ENCODE measurements at regions of chr19 and their contacts with region 1.

Region 1: GRCh38 chr19:17390665-17391370 is 3.2 kb downstream of the CCDC194 start:
- DNase-seq: peak; percentile 93
- H3K4me3 ChIP-seq: peak overlapping the region; percentile 11 to 50 (median 30)
- H3K27ac ChIP-seq: peak overlapping the region; percentile 10 to 53 (median 38)
- H3K4me1 ChIP-seq: peaks cover 0 to 22% (median 11%) of the 10 kb centered on the region in 4 donors
- H3K27me3 ChIP-seq: peaks cover 36% of the 10 kb centered on the region
- CTCF ChIP-seq: peak; percentile 38 to 76 (median 58)
- EP300 ChIP-seq: no peak
- POLR2A ChIP-seq: no peak

Region 2: DNA sequence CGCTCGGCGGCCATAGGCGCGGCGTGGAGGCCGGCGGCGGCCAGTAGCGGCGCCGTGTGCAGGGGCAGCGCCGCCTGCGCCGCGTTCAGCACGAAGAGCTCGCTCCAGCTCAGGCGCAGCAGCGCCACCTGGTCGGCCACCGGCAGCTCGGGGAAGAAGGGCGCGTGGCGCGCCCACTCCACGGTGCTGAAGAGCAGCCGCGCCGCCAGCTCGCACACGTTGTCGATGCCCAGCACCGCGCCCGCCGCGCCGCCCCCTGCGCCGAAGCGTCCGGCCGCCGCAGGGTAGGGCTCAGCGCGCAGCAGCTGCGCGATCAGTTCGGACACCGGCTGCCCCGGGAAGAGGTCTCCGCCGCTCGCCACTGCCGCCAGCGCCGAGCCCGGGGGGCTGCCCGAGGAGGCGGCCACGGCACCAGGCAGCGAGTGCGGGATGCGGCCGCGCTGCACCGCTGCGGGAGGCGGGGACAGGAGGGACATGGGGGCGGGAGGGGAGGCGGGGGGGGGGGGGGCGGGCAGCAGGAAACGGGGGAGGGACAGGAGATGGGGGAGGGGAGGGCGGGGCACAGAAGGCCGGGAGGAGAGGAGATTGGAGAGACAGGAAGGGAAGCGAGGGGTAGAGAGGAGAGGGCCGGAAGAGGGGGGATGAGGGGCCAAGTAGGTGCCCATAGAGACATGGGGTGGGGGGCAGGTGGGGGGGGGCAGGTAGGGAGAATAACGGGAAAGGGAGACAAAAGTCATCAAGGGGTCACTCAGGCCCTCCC is 155.0 kb before region 1 on chr19:
- in situ Hi-C with region 1: no loop called
- intact Hi-C with region 1: no loop called
- DNase-seq: peak; percentile 80
- H3K4me3 ChIP-seq: peak overlapping the region; percentile 27 to 58 (median 44)
- H3K27ac ChIP-seq: peak overlapping the region; percentile 75 to 91 (median 85)
- H3K4me1 ChIP-seq: peaks cover 13 to 62% (median 40%) of the 10 kb centered on the region in 4 donors
- H3K27me3 ChIP-seq: no peaks in the 10 kb centered on the region
- CTCF ChIP-seq: peak in 4 of 5 experiments; percentile 26 to 58 (median 40)
- EP300 ChIP-seq: no peak
- POLR2A ChIP-seq: no peak

Region 3: DNA sequence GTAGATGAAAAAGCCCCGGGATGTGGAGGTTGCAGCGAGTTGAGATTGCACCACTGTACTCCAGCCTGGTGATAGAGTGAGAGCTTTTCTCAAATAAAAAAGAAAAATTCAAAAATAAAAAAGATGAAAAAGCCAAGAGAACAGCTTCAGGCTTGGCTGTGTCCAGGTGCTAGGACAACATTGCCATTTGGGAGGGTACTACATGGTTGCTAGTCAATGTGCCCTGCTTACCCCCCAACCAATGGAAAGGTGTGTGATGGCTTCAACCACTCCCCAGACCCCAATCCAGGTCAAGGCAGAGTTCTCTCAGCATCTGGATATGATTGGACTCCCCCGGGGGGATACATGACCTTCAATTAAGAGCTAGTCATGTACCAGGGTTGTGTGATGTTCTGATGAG is 111.4 kb before region 1 on chr19:
- in situ Hi-C with region 1: no loop called
- intact Hi-C with region 1: no loop called
- DNase-seq: no peak
- H3K4me3 ChIP-seq: no peak overlapping the region
- H3K27ac ChIP-seq: no peak overlapping the region
- H3K4me1 ChIP-seq: peaks cover 12 to 18% (median 16%) of the 10 kb centered on the region in 4 donors
- H3K27me3 ChIP-seq: peaks cover 14% of the 10 kb centered on the region
- CTCF ChIP-seq: no peak
- EP300 ChIP-seq: no peak
- POLR2A ChIP-seq: no peak

Region 4: DNA sequence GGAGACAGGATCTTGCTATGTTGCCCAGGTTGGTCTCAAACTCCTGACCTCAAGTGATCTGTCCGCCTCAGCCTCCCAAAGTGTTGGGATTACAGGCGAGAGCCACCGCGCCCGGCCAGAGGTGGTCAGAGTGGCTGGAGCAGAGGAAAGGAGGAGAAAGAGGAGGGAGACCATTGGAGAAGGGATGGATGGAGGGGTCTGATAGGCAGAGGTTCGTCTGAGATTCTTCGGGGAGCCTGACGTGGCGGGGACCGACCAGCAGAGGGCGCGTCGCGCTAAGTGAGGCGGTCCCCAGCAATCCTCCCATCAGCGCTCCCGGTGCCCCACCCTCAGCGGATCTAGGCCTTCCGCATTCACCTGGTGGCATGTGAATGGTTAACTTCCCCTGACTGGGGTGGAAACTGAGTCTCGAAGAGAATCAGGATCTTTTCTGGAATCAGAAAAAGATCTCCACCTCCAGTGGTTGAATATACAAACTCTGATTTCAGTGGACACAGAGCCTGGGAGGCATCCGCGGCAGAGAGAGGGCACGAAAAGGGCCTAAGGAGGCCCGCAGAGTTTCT is 44.6 kb before region 1 on chr19:
- in situ Hi-C with region 1: loop called in 2 of 4 experiments (anchors 5 kb)
- intact Hi-C with region 1: loop called (anchors 2 kb)
- DNase-seq: peak; percentile 82
- H3K4me3 ChIP-seq: no peak overlapping the region
- H3K27ac ChIP-seq: peak overlapping the region in 2 of 4 donors; percentile 35 to 40
- H3K4me1 ChIP-seq: peaks cover 0 to 24% (median 3%) of the 10 kb centered on the region in 4 donors
- H3K27me3 ChIP-seq: peaks cover 25% of the 10 kb centered on the region
- CTCF ChIP-seq: peak; percentile 92 to 95 (median 94)
- EP300 ChIP-seq: no peak
- POLR2A ChIP-seq: no peak

Region 5: GRCh38 chr19:17359905-17360800 is 30.7 kb before region 1 on chr19:
- in situ Hi-C with region 1: no loop called
- intact Hi-C with region 1: loop called (anchors 1 kb)
- DNase-seq: no peak
- H3K4me3 ChIP-seq: no peak overlapping the region
- H3K27ac ChIP-seq: no peak overlapping the region
- H3K4me1 ChIP-seq: no peaks in the 10 kb centered on the region
- H3K27me3 ChIP-seq: no peaks in the 10 kb centered on the region
- CTCF ChIP-seq: no peak
- EP300 ChIP-seq: no peak
- POLR2A ChIP-seq: no peak

Region 6: GRCh38 chr19:17469481-17470067 is 78.8 kb after region 1 on chr19:
- in situ Hi-C with region 1: loop called in 1 of 4 experiments (anchors 10 kb)
- intact Hi-C with region 1: no loop called
- DNase-seq: peak; percentile 97
- H3K4me3 ChIP-seq: peak overlapping the region; percentile 22 to 88 (median 64)
- H3K27ac ChIP-seq: peak overlapping the region; percentile 82 to 88 (median 87)
- H3K4me1 ChIP-seq: peaks cover 13 to 40% (median 22%) of the 10 kb centered on the region in 4 donors
- H3K27me3 ChIP-seq: no peaks in the 10 kb centered on the region
- CTCF ChIP-seq: no peak
- EP300 ChIP-seq: no peak
- POLR2A ChIP-seq: no peak